ENCODE measurements at regions of chr1 and their contacts with region 1.

Region 1: GRCh38 chr1:94045465-94046056 is 75.4 kb downstream of the ABCA4 start:
- DNase-seq: peak; percentile 65
- H3K4me3 Mint-ChIP-seq: peak overlapping the region; percentile 37
- H3K27ac Mint-ChIP-seq: no peak overlapping the region
- H3K4me1 Mint-ChIP-seq: no peaks in the 10 kb centered on the region
- H3K27me3 Mint-ChIP-seq: peaks cover 14% of the 10 kb centered on the region

Region 2: DNA sequence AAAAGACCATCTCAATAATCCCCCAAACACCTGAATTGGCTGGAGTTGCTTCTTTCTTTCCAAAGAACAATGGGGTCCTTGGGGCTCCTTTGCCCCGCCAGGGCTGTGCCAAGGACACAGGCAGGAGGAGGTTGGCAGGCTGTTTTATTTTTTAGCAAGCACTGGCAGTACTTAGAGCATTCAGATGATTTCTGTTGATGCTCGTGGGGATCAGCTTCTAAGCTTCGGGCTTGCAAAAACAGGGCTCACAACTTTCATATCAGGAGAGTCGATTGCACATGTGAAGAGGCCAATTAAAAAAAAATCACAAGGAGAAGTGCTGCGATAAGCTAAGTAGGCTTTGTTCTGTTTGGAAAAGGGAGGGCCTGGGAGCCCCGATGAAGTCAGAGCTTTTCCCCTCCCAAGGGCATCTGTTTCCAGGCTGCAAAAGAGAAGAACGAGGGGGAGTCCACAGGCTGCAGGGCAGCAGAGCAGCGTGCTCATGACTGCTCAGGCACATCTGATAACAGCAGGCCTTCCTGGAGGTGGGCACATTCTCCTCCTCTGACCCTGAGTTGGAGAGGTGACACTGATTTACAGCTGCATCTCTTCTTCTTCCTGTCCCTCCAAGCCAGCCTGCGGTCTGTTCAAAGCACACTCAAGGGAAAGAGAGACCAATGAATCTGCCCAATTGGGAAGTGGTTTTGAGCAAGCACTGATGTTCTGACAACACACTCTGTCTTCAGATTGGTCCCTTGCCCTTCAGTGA is 336.7 kb before region 1 on chr1:
- CTCF ChIA-PET with region 1: no interaction called
- intact Hi-C with region 1: no loop called
- DNase-seq: peak; percentile 13
- H3K4me3 Mint-ChIP-seq: no peak overlapping the region
- H3K27ac Mint-ChIP-seq: no peak overlapping the region
- H3K4me1 Mint-ChIP-seq: peaks cover 27% of the 10 kb centered on the region
- H3K27me3 Mint-ChIP-seq: peaks cover 13% of the 10 kb centered on the region

Region 3: DNA sequence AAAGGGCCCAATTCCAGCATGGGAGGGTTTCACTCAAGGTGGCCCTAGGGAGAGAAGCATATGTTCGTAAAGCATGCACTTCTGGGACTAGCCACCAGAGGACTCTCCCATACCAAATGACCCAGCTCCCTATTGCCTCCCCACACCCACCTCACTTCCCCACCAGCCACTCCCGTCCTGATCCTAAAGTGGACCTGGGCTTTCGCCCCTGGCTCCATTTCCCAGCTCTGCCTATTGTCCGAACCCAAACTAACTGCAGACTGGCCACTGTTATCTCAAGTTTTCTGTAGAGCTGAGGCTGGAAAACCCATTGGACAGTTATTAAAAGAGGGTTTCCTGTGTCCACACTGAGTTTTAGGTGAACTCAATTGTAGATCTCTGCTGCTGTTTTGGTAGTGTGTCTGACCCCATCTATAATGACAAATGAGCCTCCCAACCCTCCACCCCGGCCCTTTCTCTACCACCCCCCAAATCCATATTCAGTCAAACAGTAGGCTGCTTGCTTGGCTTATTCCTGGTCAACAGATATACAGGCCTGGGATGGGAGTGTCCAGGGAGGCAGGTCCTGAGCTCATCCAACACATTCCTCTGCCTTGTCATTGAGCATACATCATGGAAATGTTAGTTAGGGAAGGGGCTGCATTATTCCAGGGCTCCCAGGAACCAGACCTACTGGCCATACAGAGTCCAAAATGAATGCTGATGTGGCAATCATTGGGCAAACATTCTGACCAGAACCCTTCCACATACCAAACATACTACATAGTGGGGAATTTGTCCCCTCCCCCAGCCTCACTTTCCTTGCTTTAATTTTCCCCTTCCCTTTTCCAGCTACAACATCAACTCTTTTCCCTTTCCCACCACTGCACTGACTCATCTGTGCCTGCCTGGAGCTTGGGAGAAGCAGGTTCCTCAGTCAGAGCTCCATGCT is 16.2 kb after region 1 on chr1:
- CTCF ChIA-PET with region 1: interaction called, 16 read pairs
- intact Hi-C with region 1: no loop called
- DNase-seq: peak; percentile 60
- H3K4me3 Mint-ChIP-seq: no peak overlapping the region
- H3K27ac Mint-ChIP-seq: no peak overlapping the region
- H3K4me1 Mint-ChIP-seq: no peaks in the 10 kb centered on the region
- H3K27me3 Mint-ChIP-seq: peaks cover 7% of the 10 kb centered on the region